Dendritic cell treated with granulocyte-macrophage colony-stimulating factor and Interleukin-4, amounts not matched to agents 40 ng/mL and 50 ng/mL, for 4 days (primary cell): ENCODE measurements at regions of chr1 and their contacts with region 1.

Region 1: DNA sequence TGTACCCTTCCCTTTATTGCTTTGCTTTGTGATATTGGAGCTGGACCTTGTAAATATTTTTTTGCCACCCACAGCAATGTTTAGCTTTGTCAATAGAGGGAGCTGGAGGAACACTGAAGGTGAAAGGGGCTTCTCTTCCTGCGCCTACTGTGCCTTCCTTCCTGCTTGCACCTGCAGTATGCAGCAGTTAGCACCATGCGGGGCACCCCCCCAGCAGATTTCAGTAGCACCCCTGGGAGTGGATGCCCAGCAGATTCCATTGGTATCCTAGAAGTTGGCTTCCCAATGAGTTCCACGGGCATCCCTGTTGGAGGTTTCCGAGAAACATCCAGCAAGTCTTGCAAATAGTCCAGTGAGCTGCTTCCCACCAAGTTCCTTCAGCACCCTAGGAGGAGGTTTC is 25.6 kb downstream of the S100A10 start:
- H3K4me3 Mint-ChIP-seq: no peak overlapping the region
- H3K27ac Mint-ChIP-seq: no peak overlapping the region
- H3K4me1 Mint-ChIP-seq: peaks cover 41% of the 10 kb centered on the region
- H3K27me3 Mint-ChIP-seq: no peaks in the 10 kb centered on the region

Region 2: DNA sequence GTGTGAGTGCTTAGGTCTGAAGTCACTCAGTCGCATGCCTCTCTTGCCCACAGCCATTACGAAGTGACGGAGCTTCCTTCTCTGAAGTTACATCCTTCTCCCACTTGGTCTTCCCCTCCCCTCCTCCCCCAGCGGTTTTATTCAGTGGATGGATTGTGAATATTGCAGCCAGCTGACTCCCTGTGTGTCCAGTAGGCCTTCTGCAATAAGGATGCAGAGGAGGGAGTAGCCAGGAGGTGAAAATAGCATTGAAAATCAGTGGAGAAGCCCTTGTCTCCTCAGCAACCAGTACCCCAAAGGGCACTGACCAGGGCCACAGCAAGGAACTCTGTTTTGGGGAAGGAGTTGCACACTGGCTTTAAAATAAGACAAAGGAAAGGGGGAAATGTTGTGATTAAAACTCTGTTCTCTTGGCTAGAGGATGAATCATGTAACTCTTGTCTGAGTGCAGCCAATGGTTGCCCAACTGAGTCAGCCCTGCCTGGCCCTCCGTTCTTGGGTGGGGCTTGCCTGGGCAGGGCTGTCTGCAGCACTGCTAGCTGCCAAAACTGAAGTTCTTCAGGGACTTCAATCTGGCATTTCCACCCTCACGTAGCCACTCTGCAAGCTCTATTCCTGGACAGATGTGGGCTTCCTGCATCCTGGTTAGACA is 21.3 kb after region 1 on chr1:
- intact Hi-C with region 1: loop called (anchors 2 kb)
- H3K4me3 Mint-ChIP-seq: peak overlapping the region; percentile 62
- H3K27ac Mint-ChIP-seq: peak overlapping the region; percentile 97
- H3K4me1 Mint-ChIP-seq: peaks cover 64% of the 10 kb centered on the region
- H3K27me3 Mint-ChIP-seq: no peaks in the 10 kb centered on the region